ENCODE measurements at regions of chr18 and their contacts with region 1.

Region 1: GRCh38 chr18:7177116-7177744 is 53.7 kb upstream of the LRRC30 start:
- DNase-seq: no peak
- H3K4me3 ChIP-seq: no peak overlapping the region
- H3K27ac ChIP-seq: no peak overlapping the region
- H3K4me1 ChIP-seq: peaks cover 0 to 6% (median 0%) of the 10 kb centered on the region in 6 donors
- H3K27me3 ChIP-seq: no peaks in the 10 kb centered on the region
- CTCF ChIP-seq: peak; percentile 13 to 69 (median 58)
- POLR2A ChIP-seq: no peak

Region 2: DNA sequence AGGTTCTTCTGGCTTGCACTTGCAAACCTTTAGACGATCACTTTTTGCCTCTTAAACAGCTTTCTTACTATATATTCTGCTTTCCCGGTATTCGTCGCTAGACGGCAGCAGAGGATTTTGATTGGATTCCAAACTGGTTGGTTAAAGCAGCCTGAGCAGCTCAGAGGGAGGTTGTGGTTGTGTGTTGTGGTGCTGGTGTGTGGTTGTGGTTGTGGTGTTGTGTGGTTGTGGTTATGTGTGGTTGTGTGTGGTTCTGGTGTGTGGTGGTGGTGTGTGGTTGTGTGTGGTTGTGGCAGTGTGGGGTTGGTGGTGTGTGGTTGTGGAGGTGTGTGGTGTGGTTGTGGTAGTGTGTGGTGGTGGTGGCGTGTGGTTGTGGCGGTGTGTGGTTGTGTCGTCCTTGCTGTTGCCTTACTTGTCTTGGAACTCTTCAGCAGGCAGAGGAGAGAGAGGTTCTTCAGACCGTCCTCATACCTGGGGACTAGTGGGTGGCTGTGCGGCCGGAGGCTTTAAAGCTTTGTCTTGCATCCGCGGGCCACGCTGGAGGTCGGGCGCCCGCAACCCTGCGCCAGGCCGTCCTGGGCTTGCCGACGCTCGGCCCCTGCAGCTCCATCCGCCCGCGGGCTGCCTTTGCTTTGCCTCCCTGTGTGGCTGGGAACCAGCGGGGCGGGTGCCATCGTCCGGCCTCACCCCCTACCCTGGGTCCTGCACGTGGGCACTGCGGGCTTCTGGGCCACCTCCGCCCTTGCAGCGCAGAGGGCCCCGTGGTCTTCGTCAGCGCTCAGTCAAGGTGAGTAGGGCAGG is 256.9 kb before region 1 on chr18:
- intact Hi-C with region 1: loop called (anchors 5 kb)
- DNase-seq: no peak
- H3K4me3 ChIP-seq: no peak overlapping the region
- H3K27ac ChIP-seq: no peak overlapping the region
- H3K4me1 ChIP-seq: no peaks in the 10 kb centered on the region
- H3K27me3 ChIP-seq: no peaks in the 10 kb centered on the region
- CTCF ChIP-seq: peak in 6 of 11 experiments; percentile 28 to 59 (median 46)
- POLR2A ChIP-seq: no peak

Region 3: GRCh38 chr18:7233134-7233810 is 56.0 kb after region 1 on chr18:
- intact Hi-C with region 1: no loop called
- DNase-seq: no peak
- H3K4me3 ChIP-seq: no peak overlapping the region
- H3K27ac ChIP-seq: no peak overlapping the region
- H3K4me1 ChIP-seq: peaks cover 0 to 21% (median 2%) of the 10 kb centered on the region in 6 donors
- H3K27me3 ChIP-seq: no peaks in the 10 kb centered on the region
- CTCF ChIP-seq: no peak
- POLR2A ChIP-seq: no peak

Measured in spleen (tissue), 13 donors.